CD8-positive, alpha-beta T cell (primary cell): ENCODE measurements at regions of chr21 and their contacts with region 1.

Region 1: GRCh38 chr21:39737511-39738233 is 7.3 kb upstream of the IGSF5 start:
- DNase-seq: no peak
- ATAC-seq: no peak
- H3K4me3 ChIP-seq: no peak overlapping the region
- H3K4me3 Mint-ChIP-seq: no peak overlapping the region
- H3K27ac ChIP-seq: no peak overlapping the region
- H3K27ac Mint-ChIP-seq: no peak overlapping the region
- H3K4me1 ChIP-seq: no peaks in the 10 kb centered on the region
- H3K4me1 Mint-ChIP-seq: no peaks in the 10 kb centered on the region
- H3K27me3 ChIP-seq: no peaks in the 10 kb centered on the region
- H3K27me3 Mint-ChIP-seq: peaks cover 3% of the 10 kb centered on the region
- CTCF ChIP-seq: no peak

Region 2: DNA sequence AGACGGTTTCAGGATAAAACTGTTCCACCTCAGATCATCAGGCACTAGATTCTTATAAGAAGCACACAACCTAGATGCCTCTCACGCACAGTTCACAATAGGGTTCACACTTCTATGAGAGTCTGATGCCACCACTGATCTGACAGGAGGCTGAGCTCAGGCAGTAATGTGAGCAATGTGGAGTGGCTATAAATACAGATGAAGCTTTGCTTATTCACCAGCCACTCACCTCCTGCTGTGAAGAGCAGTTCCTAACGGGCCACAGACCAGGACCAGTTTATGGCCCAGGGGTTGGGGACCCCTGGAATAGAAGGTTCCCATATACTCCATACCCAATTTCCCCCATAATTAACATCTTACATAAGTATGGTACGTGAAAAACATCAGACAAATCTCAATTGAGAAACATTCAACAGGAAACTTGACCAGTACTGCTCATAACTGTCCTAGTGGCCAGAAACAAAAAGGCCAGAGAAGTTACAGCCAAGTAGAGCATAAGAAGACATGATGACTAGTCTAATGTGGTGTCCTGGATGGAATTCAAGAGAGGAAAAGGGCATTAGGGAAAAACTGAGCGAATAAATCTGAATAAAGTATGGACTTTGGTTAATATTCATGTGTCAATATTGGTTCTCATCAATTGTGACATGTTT is 17.4 kb before region 1 on chr21:
- CTCF ChIA-PET with region 1: no interaction called
- POLR2A ChIA-PET with region 1: no interaction called
- intact Hi-C with region 1: no loop called
- DNase-seq: no peak
- ATAC-seq: no peak
- H3K4me3 ChIP-seq: no peak overlapping the region
- H3K4me3 Mint-ChIP-seq: no peak overlapping the region
- H3K27ac ChIP-seq: no peak overlapping the region
- H3K27ac Mint-ChIP-seq: no peak overlapping the region
- H3K4me1 ChIP-seq: no peaks in the 10 kb centered on the region
- H3K4me1 Mint-ChIP-seq: no peaks in the 10 kb centered on the region
- H3K27me3 ChIP-seq: peaks cover 0 to 2% of the 10 kb centered on the region in 2 experiments
- H3K27me3 Mint-ChIP-seq: peaks cover 5% of the 10 kb centered on the region
- CTCF ChIP-seq: no peak

Region 3: GRCh38 chr21:39776589-39776988 is 38.9 kb after region 1 on chr21:
- CTCF ChIA-PET with region 1: no interaction called
- POLR2A ChIA-PET with region 1: no interaction called
- intact Hi-C with region 1: no loop called
- DNase-seq: no peak
- ATAC-seq: no peak
- H3K4me3 ChIP-seq: no peak overlapping the region
- H3K4me3 Mint-ChIP-seq: no peak overlapping the region
- H3K27ac ChIP-seq: no peak overlapping the region
- H3K27ac Mint-ChIP-seq: no peak overlapping the region
- H3K4me1 ChIP-seq: no peaks in the 10 kb centered on the region
- H3K4me1 Mint-ChIP-seq: no peaks in the 10 kb centered on the region
- H3K27me3 ChIP-seq: no peaks in the 10 kb centered on the region
- H3K27me3 Mint-ChIP-seq: no peaks in the 10 kb centered on the region
- CTCF ChIP-seq: no peak

Region 4: GRCh38 chr21:39788383-39788782 is 50.7 kb after region 1 on chr21:
- CTCF ChIA-PET with region 1: no interaction called
- POLR2A ChIA-PET with region 1: no interaction called
- intact Hi-C with region 1: loop called in 1 of 2 experiments (anchors 5 kb)
- DNase-seq: no peak
- ATAC-seq: no peak
- H3K4me3 ChIP-seq: no peak overlapping the region
- H3K4me3 Mint-ChIP-seq: no peak overlapping the region
- H3K27ac ChIP-seq: no peak overlapping the region
- H3K27ac Mint-ChIP-seq: no peak overlapping the region
- H3K4me1 ChIP-seq: no peaks in the 10 kb centered on the region
- H3K4me1 Mint-ChIP-seq: no peaks in the 10 kb centered on the region
- H3K27me3 ChIP-seq: no peaks in the 10 kb centered on the region
- H3K27me3 Mint-ChIP-seq: no peaks in the 10 kb centered on the region
- CTCF ChIP-seq: no peak